Tibial artery (tissue), 4 donors: ENCODE measurements at regions of chr1 and their contacts with region 1.

Region 1: DNA sequence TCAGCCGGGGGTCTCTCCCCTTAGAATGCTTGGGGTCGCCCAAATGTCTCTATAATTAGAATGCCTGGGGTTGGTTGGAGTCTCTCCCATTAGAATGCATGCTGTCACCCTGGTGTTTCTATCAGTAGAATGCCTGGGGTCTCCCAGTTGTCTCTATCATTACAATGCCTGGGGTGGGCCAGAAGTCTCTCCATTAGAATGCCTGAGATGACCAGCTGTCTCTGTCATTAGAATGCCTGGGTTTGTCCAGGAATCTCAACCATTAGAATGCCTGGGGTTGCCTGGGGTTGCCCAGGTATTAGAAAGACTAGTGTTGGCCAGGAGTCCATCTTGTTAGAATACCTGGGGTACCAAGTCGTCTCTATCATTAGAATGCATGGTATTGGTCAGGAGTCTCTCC is 51.6 kb downstream of the RNF187 start:
- DNase-seq: peak in 1 of 2 donors; percentile 6
- H3K4me3 ChIP-seq: no peak overlapping the region
- H3K27ac ChIP-seq: no peak overlapping the region
- H3K4me1 ChIP-seq: no peaks in the 10 kb centered on the region
- H3K27me3 ChIP-seq: peaks cover 0 to 8% of the 10 kb centered on the region in 2 donors
- CTCF ChIP-seq: no peak

Region 2: GRCh38 chr1:228293816-228294500 is 244.9 kb before region 1 on chr1:
- intact Hi-C with region 1: no loop called
- DNase-seq: no peak
- H3K4me3 ChIP-seq: no peak overlapping the region
- H3K27ac ChIP-seq: no peak overlapping the region
- H3K4me1 ChIP-seq: no peaks in the 10 kb centered on the region
- H3K27me3 ChIP-seq: no peaks in the 10 kb centered on the region
- CTCF ChIP-seq: no peak

Region 3: GRCh38 chr1:228493141-228494043 is 45.4 kb before region 1 on chr1:
- intact Hi-C with region 1: loop called (anchors 2 kb)
- DNase-seq: no peak
- H3K4me3 ChIP-seq: no peak overlapping the region
- H3K27ac ChIP-seq: no peak overlapping the region
- H3K4me1 ChIP-seq: peaks cover 0 to 24% (median 20%) of the 10 kb centered on the region in 4 donors
- H3K27me3 ChIP-seq: no peaks in the 10 kb centered on the region
- CTCF ChIP-seq: no peak